ENCODE measurements at regions of chr15 and their contacts with region 1.

Region 1: GRCh38 chr15:73633111-73633990 is at the start of gene NPTN:
- H3K4me3 ChIP-seq: peak within 1 kb of the TSS; percentile 97
- H3K27ac ChIP-seq: peak within 1 kb of the TSS; percentile 73
- H3K4me1 ChIP-seq: peaks cover 40% of the 10 kb centered on the region
- CTCF ChIP-seq: peak; percentile 98

Region 2: DNA sequence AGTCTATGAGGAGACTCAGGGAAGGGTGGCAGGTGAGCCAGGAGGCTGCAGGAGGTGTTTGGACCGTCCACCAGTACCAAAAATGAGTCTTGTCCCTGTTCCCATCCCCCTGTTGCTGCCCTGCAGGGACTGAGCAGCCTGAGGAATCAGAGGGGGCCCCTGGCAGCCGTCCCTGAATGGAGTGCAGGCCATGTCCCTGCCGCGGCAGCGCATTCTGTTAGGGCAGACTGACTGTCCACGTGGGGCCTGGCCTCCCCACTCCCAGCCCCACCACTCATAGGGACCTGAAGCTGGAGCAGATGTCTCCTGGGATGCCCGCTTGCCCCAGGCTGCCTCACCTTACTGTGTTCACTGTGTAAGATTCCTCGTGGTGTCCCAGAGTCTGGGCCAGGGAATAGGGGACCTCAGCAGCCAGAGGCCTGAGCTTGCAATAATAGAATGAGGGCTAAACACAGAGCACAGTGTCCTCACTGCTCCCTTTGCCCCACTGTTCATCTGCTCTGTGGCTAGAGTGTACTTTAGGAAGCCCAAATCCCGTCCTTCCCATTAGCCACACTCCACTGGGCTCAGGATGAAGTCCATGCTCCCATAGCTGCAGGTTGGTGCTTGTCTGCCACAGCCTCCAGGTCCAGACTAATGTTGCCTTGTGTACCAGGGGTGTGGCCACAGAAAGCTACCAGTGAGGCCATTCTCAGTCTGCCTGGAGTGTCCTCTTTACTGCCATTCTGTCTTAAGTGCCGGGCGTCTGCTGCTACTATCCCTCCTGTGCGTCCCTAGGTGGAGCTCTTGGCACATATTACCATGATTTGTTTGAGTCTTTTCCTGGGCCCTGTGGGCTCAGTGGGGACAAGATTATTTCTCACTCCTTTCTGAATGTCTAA is 327.8 kb before region 1 on chr15:
- CTCF ChIA-PET with region 1: interaction called, 55 read pairs
- POLR2A ChIA-PET with region 1: interaction called, 7 read pairs
- H3K4me3 ChIP-seq: no peak overlapping the region
- H3K27ac ChIP-seq: no peak overlapping the region
- H3K4me1 ChIP-seq: no peaks in the 10 kb centered on the region
- CTCF ChIP-seq: peak; percentile 77

Region 3: GRCh38 chr15:73560501-73561117 is 72.7 kb before region 1 on chr15:
- CTCF ChIA-PET with region 1: interaction called, 168 read pairs
- POLR2A ChIA-PET with region 1: interaction called, 5 read pairs
- H3K4me3 ChIP-seq: no peak overlapping the region
- H3K27ac ChIP-seq: no peak overlapping the region
- H3K4me1 ChIP-seq: peaks cover 7% of the 10 kb centered on the region; the same call in 1 of the 2 replicates
- CTCF ChIP-seq: no peak

Region 4: GRCh38 chr15:73596174-73596573 is 37.2 kb before region 1 on chr15:
- CTCF ChIA-PET with region 1: interaction called, 36 read pairs
- POLR2A ChIA-PET with region 1: interaction called, 5 read pairs
- H3K4me3 ChIP-seq: no peak overlapping the region
- H3K27ac ChIP-seq: no peak overlapping the region
- H3K4me1 ChIP-seq: peaks cover 64% of the 10 kb centered on the region
- CTCF ChIP-seq: no peak

Region 5: DNA sequence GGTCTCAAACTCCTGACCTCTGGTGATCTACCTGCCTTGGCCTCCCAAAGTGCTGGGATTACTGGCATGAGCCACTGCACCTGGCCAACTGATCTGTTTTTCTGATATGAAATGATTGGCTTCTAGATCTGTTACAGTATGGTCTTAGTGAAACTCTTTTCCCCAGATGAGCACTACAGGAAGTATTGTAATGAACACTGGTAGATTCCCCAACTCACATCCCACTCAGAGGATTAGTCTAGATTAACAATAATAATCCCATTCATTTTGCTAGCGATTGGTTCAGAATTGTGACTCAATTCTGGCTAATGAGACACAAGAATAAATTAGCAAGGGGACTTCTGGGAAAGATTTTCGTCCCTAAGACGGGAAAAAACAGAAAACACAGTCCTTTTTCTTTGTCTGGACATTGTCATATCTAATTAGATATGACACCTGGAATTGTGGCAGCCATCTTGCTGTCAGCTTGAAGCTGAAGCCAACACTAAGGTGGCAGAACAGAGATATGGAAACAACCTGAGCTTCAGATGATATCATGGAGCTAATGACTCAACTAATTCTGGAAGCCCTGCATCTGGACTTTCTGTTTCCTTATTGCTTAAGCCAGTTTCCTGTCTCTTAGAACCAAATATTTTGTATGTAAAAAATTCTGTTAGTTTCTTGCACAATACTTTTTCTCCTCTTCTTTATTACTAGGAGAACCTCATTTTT is 17.2 kb after region 1 on chr15:
- CTCF ChIA-PET with region 1: interaction called, 60 read pairs
- POLR2A ChIA-PET with region 1: interaction called, 5 read pairs
- H3K4me3 ChIP-seq: no peak overlapping the region
- H3K27ac ChIP-seq: no peak overlapping the region
- H3K4me1 ChIP-seq: peaks cover 16% of the 10 kb centered on the region; the same call in 1 of the 2 replicates
- CTCF ChIP-seq: no peak

Region 6: DNA sequence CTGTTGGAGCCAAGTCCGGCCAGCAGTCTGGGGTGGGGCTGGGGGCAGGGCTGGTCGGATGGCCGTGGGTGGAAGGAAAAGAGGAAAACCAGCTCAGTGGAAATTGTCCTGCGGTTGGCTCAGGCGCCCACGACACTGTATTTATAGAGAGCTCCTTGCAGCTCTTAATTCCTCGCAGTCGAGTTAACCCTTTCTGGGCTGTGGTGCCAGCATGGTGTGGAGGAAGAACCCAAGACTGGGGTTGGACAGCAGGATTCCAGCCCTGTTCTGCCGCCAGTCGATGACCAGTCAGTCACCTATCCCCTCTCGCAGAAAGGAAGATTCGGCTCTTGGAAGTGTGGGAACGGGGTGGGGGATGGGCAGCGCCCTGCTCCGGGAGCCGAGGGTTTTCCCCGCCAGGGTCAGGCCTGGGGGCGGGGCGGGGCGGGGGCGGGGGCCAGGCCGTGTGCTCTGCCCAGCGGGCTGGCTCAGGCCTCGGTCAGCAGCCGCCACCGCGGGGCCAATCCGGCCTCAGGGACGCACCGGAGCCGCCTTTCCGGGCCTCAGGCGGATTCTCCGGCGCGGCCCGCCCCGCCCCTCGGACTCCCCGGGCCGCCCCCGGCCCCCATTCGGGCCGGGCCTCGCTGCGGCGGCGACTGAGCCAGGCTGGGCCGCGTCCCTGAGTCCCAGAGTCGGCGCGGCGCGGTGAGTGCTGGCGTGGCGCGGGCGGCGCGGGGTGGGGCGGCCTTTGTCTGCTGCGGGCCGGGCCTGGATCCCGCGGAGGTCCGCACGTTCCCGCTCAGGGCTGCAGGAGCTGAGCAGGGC is 50.6 kb after region 1 on chr15 and contains the start of gene CD276:
- CTCF ChIA-PET with region 1: interaction called, 94 read pairs
- POLR2A ChIA-PET with region 1: interaction called, 18 read pairs
- H3K4me3 ChIP-seq: peak within 1 kb of the TSS; percentile 76
- H3K27ac ChIP-seq: peak within 1 kb of the TSS; percentile 88
- H3K4me1 ChIP-seq: peaks cover 19% of the 10 kb centered on the region
- CTCF ChIP-seq: no peak; the same call in none of the 2 replicates

Region 7: DNA sequence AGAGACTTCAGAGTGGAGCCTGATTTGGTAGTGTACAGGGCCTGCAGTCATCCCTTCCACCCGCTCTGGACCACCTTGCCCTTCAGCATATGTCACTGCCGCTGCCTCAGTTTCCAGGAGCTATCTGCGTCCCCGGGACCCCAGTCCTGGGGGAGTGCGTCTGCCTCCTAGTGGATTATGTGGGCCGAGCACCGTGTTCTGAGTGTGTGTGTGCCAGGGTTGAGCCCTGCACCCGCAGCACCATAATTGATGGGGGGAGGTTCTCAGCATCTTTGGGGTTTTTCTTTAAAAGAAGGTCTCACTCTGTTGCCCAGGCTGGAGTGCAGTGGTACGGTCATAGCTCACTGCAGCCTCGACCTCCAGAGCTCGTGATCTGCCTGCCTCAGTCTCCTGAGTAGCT is 84.5 kb after region 1 on chr15:
- CTCF ChIA-PET with region 1: interaction called, 10 read pairs
- POLR2A ChIA-PET with region 1: no interaction called
- H3K4me3 ChIP-seq: no peak overlapping the region
- H3K27ac ChIP-seq: no peak overlapping the region
- H3K4me1 ChIP-seq: no peaks in the 10 kb centered on the region
- CTCF ChIP-seq: peak; percentile 15; the same call in 1 of the 2 replicates

Region 8: DNA sequence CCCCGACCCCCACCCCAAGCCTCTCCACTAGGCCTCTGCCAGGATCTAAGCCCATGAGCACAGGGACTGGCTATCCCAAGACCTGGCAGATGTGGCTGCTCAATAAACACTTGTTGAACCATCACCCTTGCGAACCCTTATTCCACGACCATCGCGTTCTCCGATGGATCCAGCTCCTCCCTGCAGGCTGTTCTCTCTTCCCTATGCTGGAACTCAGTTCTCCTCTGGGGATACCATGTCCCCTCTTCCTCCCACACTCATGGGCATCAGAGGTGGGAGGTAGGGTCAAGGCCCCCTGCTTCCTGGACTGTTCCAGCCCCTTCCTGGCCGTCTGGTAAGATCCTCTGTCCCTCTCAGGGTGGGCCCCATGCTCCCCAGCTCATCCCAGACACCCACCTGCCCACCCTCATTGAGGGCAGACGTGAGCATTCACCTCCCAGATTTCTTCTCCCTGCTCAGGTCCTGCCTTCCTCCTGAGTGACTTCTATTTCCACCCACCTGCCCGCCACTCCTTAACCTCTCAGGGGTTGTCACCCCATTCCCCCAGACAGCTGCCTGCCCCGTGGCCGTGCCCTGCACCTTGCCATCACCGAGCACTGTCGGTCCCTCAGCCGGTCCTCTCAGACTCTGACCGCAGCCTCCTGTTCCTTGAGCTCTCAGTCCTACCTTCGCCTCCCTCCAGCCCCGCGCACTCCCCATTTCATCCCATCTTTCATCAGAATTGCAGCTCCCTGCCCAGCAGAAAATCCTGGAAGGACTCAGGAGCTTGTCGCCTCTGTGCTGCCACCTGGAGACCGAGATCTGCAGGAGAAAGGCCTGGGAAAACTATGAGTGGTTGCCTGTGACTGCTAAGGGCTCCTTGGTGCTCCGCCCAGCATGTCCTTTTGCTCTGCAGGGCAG is 403.2 kb after region 1 on chr15:
- CTCF ChIA-PET with region 1: no interaction called
- POLR2A ChIA-PET with region 1: no interaction called
- H3K4me3 ChIP-seq: no peak overlapping the region
- H3K27ac ChIP-seq: no peak overlapping the region
- H3K4me1 ChIP-seq: no peaks in the 10 kb centered on the region; the same call in 1 of the 2 replicates
- CTCF ChIP-seq: no peak; the same call in 1 of the 2 replicates

Measured in HEK293 (cell line).